Calu3 (cell line): ENCODE measurements at regions of chr16 and their contacts with region 1.

Region 1: GRCh38 chr16:60203525-60204124 is 1469.5 kb upstream of the GOT2 start:
- DNase-seq: no peak
- H3K4me3 Mint-ChIP-seq: no peak overlapping the region
- H3K27ac Mint-ChIP-seq: no peak overlapping the region
- H3K4me1 Mint-ChIP-seq: no peaks in the 10 kb centered on the region
- H3K27me3 Mint-ChIP-seq: no peaks in the 10 kb centered on the region
- CTCF ChIP-seq: peak; percentile 34

Region 2: DNA sequence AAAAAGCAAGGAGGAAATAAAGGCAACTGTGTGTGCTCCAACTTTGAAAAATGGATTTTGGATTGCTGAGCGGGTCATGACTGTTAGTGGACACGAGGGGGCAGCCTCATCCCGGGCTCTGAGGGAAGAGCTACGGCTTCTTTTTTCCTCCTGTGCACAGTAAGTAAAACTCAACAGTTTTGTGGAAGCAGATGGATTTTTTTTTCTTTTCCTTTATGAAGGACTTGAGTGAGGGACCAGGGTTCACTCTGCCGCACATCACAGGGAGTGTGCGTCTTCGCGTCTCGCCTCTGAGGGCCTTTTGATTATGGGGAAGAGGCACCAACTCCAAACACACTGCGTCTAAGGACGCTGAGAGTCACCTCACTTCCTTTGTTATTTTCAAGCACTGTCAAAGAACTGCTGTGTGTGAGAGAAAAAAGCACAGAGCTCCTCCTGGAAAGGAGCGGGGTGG is 1389.2 kb before region 1 on chr16:
- CTCF ChIA-PET with region 1: no interaction called
- intact Hi-C with region 1: loop called (anchors 5 kb)
- DNase-seq: peak; percentile 54
- H3K4me3 Mint-ChIP-seq: no peak overlapping the region
- H3K27ac Mint-ChIP-seq: no peak overlapping the region
- H3K4me1 Mint-ChIP-seq: no peaks in the 10 kb centered on the region
- H3K27me3 Mint-ChIP-seq: peaks cover 11% of the 10 kb centered on the region
- CTCF ChIP-seq: peak; percentile 91

Region 3: GRCh38 chr16:58843675-58844074 is 1360.0 kb before region 1 on chr16:
- CTCF ChIA-PET with region 1: no interaction called
- intact Hi-C with region 1: loop called (anchors 1 kb)
- DNase-seq: no peak
- H3K4me3 Mint-ChIP-seq: no peak overlapping the region
- H3K27ac Mint-ChIP-seq: no peak overlapping the region
- H3K4me1 Mint-ChIP-seq: no peaks in the 10 kb centered on the region
- H3K27me3 Mint-ChIP-seq: no peaks in the 10 kb centered on the region
- CTCF ChIP-seq: no peak

Region 4: DNA sequence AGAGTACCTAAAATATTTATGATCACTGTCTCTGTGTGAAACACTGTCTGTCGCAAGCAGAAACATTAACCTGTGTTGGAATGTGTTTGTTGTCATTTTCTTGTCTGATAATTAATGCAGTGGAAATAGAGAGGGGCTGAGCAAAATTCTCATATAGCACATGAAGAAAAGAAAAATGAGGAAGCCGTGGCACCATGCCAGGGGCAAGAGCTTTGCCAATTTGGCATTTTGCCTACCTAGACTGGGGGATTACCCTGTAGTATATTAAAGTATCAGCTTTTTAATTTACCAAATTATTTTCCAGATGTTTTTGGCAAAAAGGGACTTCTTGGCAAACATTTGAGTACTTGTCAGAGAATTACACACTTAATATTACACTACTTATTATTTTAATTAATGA is 142.9 kb before region 1 on chr16:
- CTCF ChIA-PET with region 1: no interaction called
- intact Hi-C with region 1: no loop called
- DNase-seq: no peak
- H3K4me3 Mint-ChIP-seq: no peak overlapping the region
- H3K27ac Mint-ChIP-seq: no peak overlapping the region
- H3K4me1 Mint-ChIP-seq: no peaks in the 10 kb centered on the region
- H3K27me3 Mint-ChIP-seq: no peaks in the 10 kb centered on the region
- CTCF ChIP-seq: no peak